BJ (cell line): ENCODE measurements at regions of chr1 and their contacts with region 1.

Region 1: DNA sequence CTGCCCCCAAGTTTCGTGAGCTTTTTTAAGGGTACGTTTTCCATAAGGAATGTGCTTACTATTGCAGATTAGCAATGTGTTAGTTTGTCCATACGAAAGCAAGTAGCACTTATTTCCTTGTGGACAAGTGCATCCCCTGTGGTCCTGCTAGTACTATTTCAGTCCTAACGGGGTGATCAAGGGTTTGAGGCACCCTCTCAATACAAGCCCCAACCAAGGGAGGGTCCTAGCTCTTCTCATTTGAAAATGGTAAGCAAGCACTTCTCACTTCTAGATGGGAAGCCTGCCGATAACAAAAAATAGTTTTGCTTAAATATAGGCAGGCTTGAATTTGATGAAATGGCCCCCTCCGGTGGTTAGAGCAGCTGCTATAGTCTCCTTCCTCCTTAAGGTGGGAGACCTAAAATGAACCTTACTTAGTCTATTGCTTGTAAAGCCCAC is 64.0 kb upstream of the HMCN1 start:
- DNase-seq: no peak
- H3K4me3 ChIP-seq: no peak overlapping the region
- H3K27me3 ChIP-seq: no peaks in the 10 kb centered on the region
- CTCF ChIP-seq: peak; percentile 73

Region 2: DNA sequence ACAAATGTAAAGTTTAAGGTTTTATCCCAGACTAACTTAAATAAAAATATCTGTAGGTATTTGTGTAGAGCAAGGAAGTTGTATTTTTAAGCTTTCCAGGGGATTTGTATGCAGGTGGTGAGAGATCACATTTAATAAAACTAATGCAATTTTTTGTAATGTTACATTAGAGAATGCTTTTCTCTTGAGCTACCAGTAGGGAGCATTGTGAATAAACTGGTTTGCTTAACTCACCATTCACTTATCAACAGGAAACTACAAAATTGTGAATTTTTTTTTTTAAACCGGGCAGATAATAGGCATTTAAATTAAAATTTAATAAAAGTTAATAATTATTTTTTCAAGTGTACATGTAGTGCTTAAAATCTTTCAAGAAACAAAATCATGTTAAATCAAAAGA is 431.8 kb before region 1 on chr1:
- CTCF ChIA-PET with region 1: interaction called, 19 read pairs
- POLR2A ChIA-PET with region 1: no interaction called
- DNase-seq: no peak
- H3K4me3 ChIP-seq: no peak overlapping the region
- H3K27me3 ChIP-seq: no peaks in the 10 kb centered on the region
- CTCF ChIP-seq: peak; percentile 48

Region 3: GRCh38 chr1:185426848-185427247 is 243.4 kb before region 1 on chr1:
- CTCF ChIA-PET with region 1: interaction called, 12 read pairs
- POLR2A ChIA-PET with region 1: no interaction called
- DNase-seq: peak; percentile 50
- H3K4me3 ChIP-seq: no peak overlapping the region
- H3K27me3 ChIP-seq: no peaks in the 10 kb centered on the region; the same call in 1 of the 2 replicates
- CTCF ChIP-seq: no peak

Region 4: GRCh38 chr1:185595835-185596667 is 74.2 kb before region 1 on chr1:
- CTCF ChIA-PET with region 1: interaction called, 12 read pairs
- POLR2A ChIA-PET with region 1: no interaction called
- DNase-seq: no peak
- H3K4me3 ChIP-seq: no peak overlapping the region
- H3K27me3 ChIP-seq: no peaks in the 10 kb centered on the region
- CTCF ChIP-seq: peak; percentile 71

Region 5: DNA sequence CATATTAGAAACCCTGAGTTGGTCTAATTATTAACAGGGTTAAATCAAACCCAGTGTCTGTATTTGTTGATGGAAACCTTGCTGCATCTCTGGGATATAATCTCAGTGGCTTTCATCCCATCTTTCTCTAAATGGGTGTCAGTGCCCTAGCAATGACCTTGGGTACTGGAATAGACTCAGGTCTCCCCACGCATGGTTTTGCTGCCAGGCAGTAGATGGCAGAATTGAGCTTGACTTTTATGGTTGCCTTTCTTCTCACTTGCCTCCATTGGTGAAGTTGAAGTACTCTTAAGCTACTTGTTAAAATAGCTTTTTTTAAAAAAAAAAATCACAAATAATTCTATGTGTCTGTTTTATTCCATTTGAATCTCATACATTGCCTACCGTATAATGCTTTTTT is 17.9 kb before region 1 on chr1:
- CTCF ChIA-PET with region 1: interaction called, 10 read pairs
- POLR2A ChIA-PET with region 1: no interaction called
- DNase-seq: no peak
- H3K4me3 ChIP-seq: no peak overlapping the region
- H3K27me3 ChIP-seq: no peaks in the 10 kb centered on the region
- CTCF ChIP-seq: no peak

Region 6: GRCh38 chr1:185681034-185681633 is 10.9 kb after region 1 on chr1:
- CTCF ChIA-PET with region 1: interaction called, 40 read pairs
- POLR2A ChIA-PET with region 1: no interaction called
- DNase-seq: no peak
- H3K4me3 ChIP-seq: no peak overlapping the region
- H3K27me3 ChIP-seq: no peaks in the 10 kb centered on the region; the same call in 1 of the 2 replicates
- CTCF ChIP-seq: peak; percentile 59